ENCODE measurements at regions of chr9 and their contacts with region 1.

Region 1: GRCh38 chr9:120916588-120916987 is 10.0 kb downstream of the TRAF1 start:
- DNase-seq: no peak
- ATAC-seq: no peak
- H3K4me3 Mint-ChIP-seq: peak overlapping the region; percentile 60
- H3K27ac Mint-ChIP-seq: peak overlapping the region; percentile 83
- H3K4me1 Mint-ChIP-seq: peaks cover 66% of the 10 kb centered on the region
- H3K27me3 Mint-ChIP-seq: no peaks in the 10 kb centered on the region

Region 2: GRCh38 chr9:120571443-120572257 is 344.9 kb before region 1 on chr9:
- POLR2A ChIA-PET with region 1: no interaction called
- DNase-seq: no peak
- ATAC-seq: no peak
- H3K4me3 Mint-ChIP-seq: no peak overlapping the region
- H3K27ac Mint-ChIP-seq: no peak overlapping the region
- H3K4me1 Mint-ChIP-seq: peaks cover 11% of the 10 kb centered on the region
- H3K27me3 Mint-ChIP-seq: no peaks in the 10 kb centered on the region

Region 3: GRCh38 chr9:120755827-120756434 is 160.7 kb before region 1 on chr9:
- POLR2A ChIA-PET with region 1: no interaction called
- DNase-seq: peak; percentile 51
- ATAC-seq: peak; percentile 60
- H3K4me3 Mint-ChIP-seq: no peak overlapping the region
- H3K27ac Mint-ChIP-seq: no peak overlapping the region
- H3K4me1 Mint-ChIP-seq: peaks cover 6% of the 10 kb centered on the region
- H3K27me3 Mint-ChIP-seq: no peaks in the 10 kb centered on the region

Region 4: DNA sequence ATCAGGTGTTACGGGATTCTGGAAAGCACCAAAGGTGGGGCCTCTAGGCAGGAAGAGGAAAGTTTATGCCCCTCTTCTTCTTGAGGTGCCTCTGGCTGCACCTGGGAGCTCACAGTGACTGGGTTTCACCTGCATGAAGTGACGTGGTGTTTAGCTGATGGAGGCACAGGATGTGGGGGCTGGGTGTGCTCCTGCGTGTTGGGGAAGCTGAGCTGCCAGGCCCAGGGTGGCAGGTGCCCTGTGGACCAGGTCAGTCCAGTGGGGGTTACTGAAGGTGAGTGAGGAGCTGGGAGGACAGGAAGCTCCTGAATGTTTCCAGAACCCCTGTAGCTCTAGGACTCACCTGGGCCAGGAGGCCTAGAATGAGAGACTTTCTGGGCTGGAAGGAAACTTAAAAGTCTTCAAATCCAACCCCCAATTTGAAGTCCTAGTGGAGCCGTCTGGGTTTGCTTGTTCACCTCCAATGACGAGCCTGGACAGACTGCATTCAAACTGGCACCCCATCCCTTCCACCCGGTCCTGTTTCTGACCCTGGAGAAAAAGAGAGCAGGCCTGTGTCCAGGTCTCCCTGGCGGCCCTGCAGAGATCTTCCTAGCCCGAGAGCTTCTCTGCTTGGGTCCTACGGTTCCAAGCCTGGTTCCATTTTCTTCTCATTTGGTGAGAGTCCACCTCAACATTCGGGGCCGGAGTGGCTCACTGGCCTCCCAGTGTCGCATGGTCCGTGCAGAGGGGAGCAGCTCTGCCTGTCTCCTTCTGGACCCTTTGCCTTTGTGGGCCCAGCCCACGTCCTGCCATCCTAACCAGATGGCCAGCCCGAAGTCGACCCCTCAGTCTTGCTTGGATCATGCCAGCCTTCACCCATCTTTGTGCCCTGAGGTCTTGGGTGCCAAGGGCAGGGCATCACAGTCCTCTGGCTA is 12.3 kb before region 1 on chr9:
- POLR2A ChIA-PET with region 1: interaction called, 36 read pairs
- DNase-seq: peak; percentile 62
- ATAC-seq: peak; percentile 57
- H3K4me3 Mint-ChIP-seq: peak overlapping the region; percentile 62
- H3K27ac Mint-ChIP-seq: peak overlapping the region; percentile 93
- H3K4me1 Mint-ChIP-seq: peaks cover 77% of the 10 kb centered on the region
- H3K27me3 Mint-ChIP-seq: no peaks in the 10 kb centered on the region

Region 5: DNA sequence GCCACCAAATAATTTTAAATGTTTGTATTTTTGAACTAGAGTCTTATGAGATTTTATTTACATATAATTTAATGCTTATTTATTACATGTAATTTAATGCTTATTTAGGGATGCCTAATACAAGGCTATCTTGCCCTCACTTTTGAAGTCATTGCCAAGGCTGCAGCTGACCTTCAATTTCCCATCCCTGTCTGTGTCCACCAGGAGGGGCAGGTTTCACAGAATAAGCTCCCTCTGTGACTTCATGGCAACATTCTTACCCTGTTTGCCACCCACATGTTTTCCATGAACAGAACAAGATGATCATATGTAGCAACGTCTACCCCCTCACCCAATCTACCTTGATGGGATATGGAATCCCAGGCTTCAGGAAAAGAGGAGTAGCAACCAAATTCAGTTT is 106.5 kb after region 1 on chr9:
- POLR2A ChIA-PET with region 1: no interaction called
- DNase-seq: no peak
- ATAC-seq: no peak
- H3K4me3 Mint-ChIP-seq: no peak overlapping the region
- H3K27ac Mint-ChIP-seq: no peak overlapping the region
- H3K4me1 Mint-ChIP-seq: no peaks in the 10 kb centered on the region
- H3K27me3 Mint-ChIP-seq: peaks cover 3% of the 10 kb centered on the region